MCF 10A (cell line): ENCODE measurements at regions of chr4 and their contacts with region 1.

Region 1: GRCh38 chr4:177322266-177322665 is 12.6 kb downstream of the NEIL3 start:
- DNase-seq: no peak
- H3K4me3 Mint-ChIP-seq: peak overlapping the region; percentile 60
- H3K27ac Mint-ChIP-seq: peak overlapping the region; percentile 92
- H3K4me1 Mint-ChIP-seq: peaks cover 44% of the 10 kb centered on the region
- H3K27me3 Mint-ChIP-seq: no peaks in the 10 kb centered on the region
- CTCF ChIP-seq: no peak

Region 2: DNA sequence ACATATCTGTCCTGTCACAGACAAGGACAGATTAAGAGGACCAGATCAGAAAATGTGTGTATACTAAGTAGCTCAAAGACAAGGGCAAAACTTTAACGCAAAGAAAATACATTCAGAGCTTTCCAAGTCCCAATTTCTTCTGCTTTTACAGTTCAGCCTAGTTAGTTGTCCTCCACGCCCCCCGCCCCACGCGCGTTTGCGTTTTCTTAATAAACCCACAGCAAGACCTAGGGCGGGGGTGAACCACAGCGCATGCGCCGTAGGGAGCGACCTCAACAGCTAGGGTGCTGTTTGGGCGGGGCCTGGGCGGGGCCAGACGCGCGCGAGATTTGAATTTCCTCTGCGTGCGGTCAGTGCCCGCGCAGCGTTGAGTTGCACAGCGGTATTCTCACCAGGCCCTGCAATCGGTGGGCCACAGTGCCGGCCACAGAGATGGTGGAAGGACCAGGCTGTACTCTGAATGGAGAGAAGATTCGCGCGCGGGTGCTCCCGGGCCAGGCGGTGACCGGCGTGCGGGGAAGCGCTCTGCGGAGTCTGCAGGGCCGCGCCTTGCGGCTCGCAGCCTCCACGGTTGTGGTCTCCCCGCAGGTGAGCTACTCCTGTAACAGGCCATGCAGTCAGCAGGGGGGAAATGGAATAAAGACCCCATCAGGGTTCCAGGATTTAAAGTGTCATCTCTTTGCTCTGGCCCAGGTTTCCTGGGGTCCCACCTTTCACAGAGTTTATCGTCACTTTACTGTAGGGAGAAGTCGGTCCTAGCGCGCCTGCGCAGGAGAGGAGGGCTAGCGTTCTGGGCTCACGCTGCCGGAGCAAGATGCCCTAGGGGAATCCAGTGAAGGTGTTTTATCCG is 12.5 kb before region 1 on chr4 and contains the start of gene NEIL3:
- CTCF ChIA-PET with region 1: interaction called, 4 read pairs
- POLR2A ChIA-PET with region 1: interaction called, 67 read pairs
- intact Hi-C with region 1: no loop called
- DNase-seq: peak; percentile 93
- H3K4me3 Mint-ChIP-seq: peak within 1 kb of the TSS; percentile 93
- H3K27ac Mint-ChIP-seq: peak within 1 kb of the TSS; percentile 85
- H3K4me1 Mint-ChIP-seq: peaks cover 29% of the 10 kb centered on the region
- H3K27me3 Mint-ChIP-seq: no peaks in the 10 kb centered on the region
- CTCF ChIP-seq: no peak
- total RNA-seq, gene NEIL3: 3.4 and 5.8 TPM in 2 replicates